Heart right ventricle (tissue), 16 donors: ENCODE measurements at regions of chr6 and their contacts with region 1.

Region 1: DNA sequence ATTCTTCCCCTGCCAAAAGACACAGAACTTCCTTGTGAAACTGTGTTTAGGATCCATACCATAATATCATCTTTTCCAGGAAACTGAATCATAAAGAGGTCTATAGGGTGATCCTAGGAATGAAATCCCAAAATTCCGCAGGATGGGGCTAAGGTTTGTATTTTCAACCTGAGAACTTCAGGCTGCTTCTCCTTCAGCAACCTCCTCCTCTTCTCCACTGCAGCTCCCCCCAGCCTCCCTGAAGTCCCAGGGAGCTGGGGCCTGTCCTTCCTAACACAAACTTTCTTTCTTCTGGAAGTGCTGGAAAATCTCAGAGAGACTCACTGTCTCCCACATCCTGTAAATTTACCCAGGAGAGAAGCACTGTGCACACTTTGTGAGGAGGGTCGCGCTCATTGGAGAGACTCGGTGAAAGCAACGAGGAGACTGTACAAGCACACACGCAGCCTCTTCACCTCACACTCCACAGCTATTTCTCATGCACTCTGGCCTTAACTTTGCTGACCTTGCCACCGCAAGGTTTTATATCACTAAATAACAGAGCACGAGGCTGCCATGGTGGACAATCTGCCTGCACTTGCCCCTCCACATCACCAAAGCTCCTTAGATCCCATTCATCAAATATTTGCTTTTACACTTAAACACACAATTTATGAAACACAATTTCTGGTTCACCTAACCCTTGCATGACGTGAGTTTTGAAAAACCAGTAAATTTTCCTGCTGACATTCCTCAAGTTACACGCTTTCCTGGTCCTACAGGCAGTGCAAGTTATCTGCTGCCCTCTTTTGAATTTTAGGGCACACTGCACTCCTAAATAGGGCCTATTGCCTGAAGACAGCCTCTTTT is 14.3 kb downstream of the ID4 start:
- DNase-seq: peak in 1 of 2 donors; percentile 21
- ATAC-seq: peak; percentile 70 to 92 (median 87)
- H3K4me3 ChIP-seq: peak overlapping the region in 1 of 10 donors; percentile 23
- H3K27ac ChIP-seq: no peak overlapping the region
- H3K4me1 ChIP-seq: peaks cover 0 to 10% (median 4%) of the 10 kb centered on the region in 9 donors
- H3K27me3 ChIP-seq: no peaks in the 10 kb centered on the region
- CTCF ChIP-seq: peak; percentile 62 to 94 (median 86)

Region 2: GRCh38 chr6:18595774-18596530 is 1255.5 kb before region 1 on chr6:
- intact Hi-C with region 1: loop called in 2 of 10 experiments (anchors 5 to 10 kb)
- DNase-seq: peak in 1 of 2 donors; percentile 63
- ATAC-seq: peak; percentile 77 to 91 (median 80)
- H3K4me3 ChIP-seq: no peak overlapping the region
- H3K27ac ChIP-seq: no peak overlapping the region
- H3K4me1 ChIP-seq: peaks cover 0 to 5% (median 0%) of the 10 kb centered on the region in 9 donors
- H3K27me3 ChIP-seq: peaks cover 0 to 11% (median 0%) of the 10 kb centered on the region in 7 donors
- CTCF ChIP-seq: peak; percentile 74 to 95 (median 89)

Region 3: GRCh38 chr6:18990059-18990978 is 861.1 kb before region 1 on chr6:
- intact Hi-C with region 1: loop called in 3 of 10 experiments (anchors 10 kb)
- DNase-seq: peak; percentile 60 to 72
- ATAC-seq: peak in 5 of 8 donors; percentile 43 to 65 (median 50)
- H3K4me3 ChIP-seq: peak overlapping the region in 3 of 10 donors; percentile 17 to 25 (median 17)
- H3K27ac ChIP-seq: no peak overlapping the region
- H3K4me1 ChIP-seq: peaks cover 0 to 9% (median 0%) of the 10 kb centered on the region in 9 donors
- H3K27me3 ChIP-seq: no peaks in the 10 kb centered on the region
- CTCF ChIP-seq: peak; percentile 26 to 76 (median 66)

Region 4: GRCh38 chr6:19002976-19003560 is 848.4 kb before region 1 on chr6:
- intact Hi-C with region 1: loop called in 4 of 10 experiments (anchors 10 kb)
- DNase-seq: no peak
- ATAC-seq: no peak
- H3K4me3 ChIP-seq: no peak overlapping the region
- H3K27ac ChIP-seq: no peak overlapping the region
- H3K4me1 ChIP-seq: no peaks in the 10 kb centered on the region
- H3K27me3 ChIP-seq: no peaks in the 10 kb centered on the region
- CTCF ChIP-seq: no peak

Region 5: GRCh38 chr6:19024737-19025136 is 826.7 kb before region 1 on chr6:
- intact Hi-C with region 1: loop called in 6 of 10 experiments (anchors 5 to 10 kb)
- DNase-seq: peak in 1 of 2 donors; percentile 25
- ATAC-seq: peak in 5 of 8 donors; percentile 49 to 69 (median 58)
- H3K4me3 ChIP-seq: no peak overlapping the region
- H3K27ac ChIP-seq: no peak overlapping the region
- H3K4me1 ChIP-seq: peaks cover 0 to 4% (median 0%) of the 10 kb centered on the region in 9 donors
- H3K27me3 ChIP-seq: no peaks in the 10 kb centered on the region
- CTCF ChIP-seq: peak; percentile 9 to 70 (median 56)

Region 6: GRCh38 chr6:19558201-19558600 is 293.3 kb before region 1 on chr6:
- intact Hi-C with region 1: no loop called
- DNase-seq: no peak
- ATAC-seq: no peak
- H3K4me3 ChIP-seq: no peak overlapping the region
- H3K27ac ChIP-seq: no peak overlapping the region
- H3K4me1 ChIP-seq: no peaks in the 10 kb centered on the region
- H3K27me3 ChIP-seq: peaks cover 0 to 6% (median 0%) of the 10 kb centered on the region in 7 donors
- CTCF ChIP-seq: no peak